ENCODE measurements at regions of chr19 and their contacts with region 1.

Region 1: GRCh38 chr19:43446746-43447489 is 18.5 kb downstream of the LYPD3 start:
- DNase-seq: peak; percentile 90
- ATAC-seq: peak; percentile 81
- H3K4me3 Mint-ChIP-seq: no peak overlapping the region
- H3K27ac Mint-ChIP-seq: no peak overlapping the region
- H3K4me1 Mint-ChIP-seq: peaks cover 27% of the 10 kb centered on the region
- H3K27me3 Mint-ChIP-seq: no peaks in the 10 kb centered on the region

Region 2: DNA sequence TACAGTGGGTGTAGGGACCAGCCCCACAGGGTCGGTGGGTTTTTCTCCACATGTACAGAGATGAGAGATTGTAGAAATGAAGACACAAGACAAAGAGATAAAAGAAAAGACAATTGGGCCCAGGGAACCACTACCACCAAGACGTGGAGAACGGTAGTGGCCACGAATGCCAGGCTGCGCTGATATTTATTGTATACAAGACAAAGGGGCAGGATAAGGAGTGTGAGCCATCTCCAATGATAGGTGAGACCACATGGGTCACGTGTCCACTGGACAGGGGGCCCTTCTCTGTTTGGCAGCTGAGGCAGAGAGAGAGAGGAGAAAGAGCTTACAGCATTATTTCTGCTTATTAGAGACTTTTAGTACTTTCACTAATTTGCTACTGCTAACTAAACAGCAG is 255.7 kb before region 1 on chr19:
- CTCF ChIA-PET with region 1: no interaction called
- POLR2A ChIA-PET with region 1: no interaction called
- intact Hi-C with region 1: no loop called
- DNase-seq: no peak
- ATAC-seq: no peak
- H3K4me3 Mint-ChIP-seq: no peak overlapping the region
- H3K27ac Mint-ChIP-seq: no peak overlapping the region
- H3K4me1 Mint-ChIP-seq: no peaks in the 10 kb centered on the region
- H3K27me3 Mint-ChIP-seq: peaks cover 37% of the 10 kb centered on the region

Region 3: GRCh38 chr19:43457809-43458208 is 10.9 kb after region 1 on chr19:
- CTCF ChIA-PET with region 1: interaction called, 44 read pairs
- POLR2A ChIA-PET with region 1: no interaction called
- intact Hi-C with region 1: no loop called
- DNase-seq: no peak
- ATAC-seq: no peak
- H3K4me3 Mint-ChIP-seq: no peak overlapping the region
- H3K27ac Mint-ChIP-seq: no peak overlapping the region
- H3K4me1 Mint-ChIP-seq: peaks cover 27% of the 10 kb centered on the region
- H3K27me3 Mint-ChIP-seq: no peaks in the 10 kb centered on the region

Region 4: GRCh38 chr19:43474986-43475705 is 28.2 kb after region 1 on chr19:
- CTCF ChIA-PET with region 1: interaction called, 3 read pairs
- POLR2A ChIA-PET with region 1: no interaction called
- intact Hi-C with region 1: loop called in 1 of 2 experiments (anchors 1 kb)
- DNase-seq: peak; percentile 98
- ATAC-seq: peak; percentile 86
- H3K4me3 Mint-ChIP-seq: peak overlapping the region; percentile 62
- H3K27ac Mint-ChIP-seq: peak overlapping the region; percentile 90
- H3K4me1 Mint-ChIP-seq: peaks cover 35% of the 10 kb centered on the region
- H3K27me3 Mint-ChIP-seq: no peaks in the 10 kb centered on the region

Region 5: DNA sequence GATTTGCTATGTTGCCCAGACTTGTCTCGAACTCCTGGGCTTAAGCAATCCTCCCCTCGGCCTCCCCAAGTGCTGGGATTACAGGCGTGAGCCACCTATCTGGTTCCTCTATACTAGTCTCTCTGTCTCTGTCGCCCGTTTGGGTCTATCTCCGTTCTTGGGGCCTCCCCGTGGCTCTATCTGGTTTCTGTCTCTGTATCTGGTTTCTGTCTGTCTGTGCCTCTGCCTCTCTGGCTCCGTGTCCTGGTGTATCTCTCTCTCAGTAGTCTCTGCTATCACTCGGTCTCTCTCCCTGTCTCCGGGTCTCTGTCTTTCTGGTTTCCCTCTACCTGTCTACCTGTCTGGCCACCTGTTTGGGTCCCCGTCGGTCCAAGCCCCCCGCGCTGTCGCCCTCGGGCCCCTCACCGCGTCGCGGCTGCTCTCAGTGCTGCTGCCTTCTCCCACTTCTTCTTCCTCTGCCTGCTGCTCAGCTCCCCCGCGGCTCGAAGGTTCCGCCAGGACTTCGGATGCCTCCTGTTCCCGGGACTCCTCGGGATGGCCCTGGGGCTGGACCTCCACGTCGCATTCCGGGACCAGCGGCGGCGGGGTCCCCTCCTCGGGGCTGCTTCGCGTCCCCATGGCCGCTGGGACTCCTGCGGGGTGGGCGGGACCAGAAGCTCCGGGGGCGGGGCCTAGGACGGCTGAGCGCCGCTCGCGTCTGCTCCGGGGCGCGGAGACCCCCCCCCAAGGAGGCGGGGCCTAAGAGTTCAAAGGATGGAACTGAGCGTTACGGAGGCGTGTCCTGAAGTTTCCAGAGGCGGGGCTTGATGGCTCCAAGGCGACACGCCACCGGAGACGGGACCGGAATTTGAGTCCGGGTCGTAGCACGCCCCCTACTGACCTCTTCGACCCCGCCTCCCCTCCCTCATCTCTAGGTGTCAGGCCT is 56.8 kb after region 1 on chr19:
- CTCF ChIA-PET with region 1: interaction called, 27 read pairs
- POLR2A ChIA-PET with region 1: interaction called, 4 read pairs
- intact Hi-C with region 1: loop called (anchors 1 to 5 kb)
- DNase-seq: peak; percentile 100
- ATAC-seq: peak; percentile 96
- H3K4me3 Mint-ChIP-seq: peak overlapping the region; percentile 96
- H3K27ac Mint-ChIP-seq: peak overlapping the region; percentile 94
- H3K4me1 Mint-ChIP-seq: peaks cover 32% of the 10 kb centered on the region
- H3K27me3 Mint-ChIP-seq: no peaks in the 10 kb centered on the region

Region 6: GRCh38 chr19:43526884-43527859 is 80.3 kb after region 1 on chr19 and contains the start of gene ETHE1:
- CTCF ChIA-PET with region 1: interaction called, 184 read pairs
- POLR2A ChIA-PET with region 1: interaction called, 3 read pairs
- intact Hi-C with region 1: no loop called
- DNase-seq: peak; percentile 87
- ATAC-seq: peak; percentile 70
- H3K4me3 Mint-ChIP-seq: peak within 1 kb of the TSS; percentile 92
- H3K27ac Mint-ChIP-seq: peak within 1 kb of the TSS; percentile 94
- H3K4me1 Mint-ChIP-seq: peaks cover 22% of the 10 kb centered on the region
- H3K27me3 Mint-ChIP-seq: no peaks in the 10 kb centered on the region
- total RNA-seq, gene ETHE1: 68.7 to 78.8 TPM

Region 7: DNA sequence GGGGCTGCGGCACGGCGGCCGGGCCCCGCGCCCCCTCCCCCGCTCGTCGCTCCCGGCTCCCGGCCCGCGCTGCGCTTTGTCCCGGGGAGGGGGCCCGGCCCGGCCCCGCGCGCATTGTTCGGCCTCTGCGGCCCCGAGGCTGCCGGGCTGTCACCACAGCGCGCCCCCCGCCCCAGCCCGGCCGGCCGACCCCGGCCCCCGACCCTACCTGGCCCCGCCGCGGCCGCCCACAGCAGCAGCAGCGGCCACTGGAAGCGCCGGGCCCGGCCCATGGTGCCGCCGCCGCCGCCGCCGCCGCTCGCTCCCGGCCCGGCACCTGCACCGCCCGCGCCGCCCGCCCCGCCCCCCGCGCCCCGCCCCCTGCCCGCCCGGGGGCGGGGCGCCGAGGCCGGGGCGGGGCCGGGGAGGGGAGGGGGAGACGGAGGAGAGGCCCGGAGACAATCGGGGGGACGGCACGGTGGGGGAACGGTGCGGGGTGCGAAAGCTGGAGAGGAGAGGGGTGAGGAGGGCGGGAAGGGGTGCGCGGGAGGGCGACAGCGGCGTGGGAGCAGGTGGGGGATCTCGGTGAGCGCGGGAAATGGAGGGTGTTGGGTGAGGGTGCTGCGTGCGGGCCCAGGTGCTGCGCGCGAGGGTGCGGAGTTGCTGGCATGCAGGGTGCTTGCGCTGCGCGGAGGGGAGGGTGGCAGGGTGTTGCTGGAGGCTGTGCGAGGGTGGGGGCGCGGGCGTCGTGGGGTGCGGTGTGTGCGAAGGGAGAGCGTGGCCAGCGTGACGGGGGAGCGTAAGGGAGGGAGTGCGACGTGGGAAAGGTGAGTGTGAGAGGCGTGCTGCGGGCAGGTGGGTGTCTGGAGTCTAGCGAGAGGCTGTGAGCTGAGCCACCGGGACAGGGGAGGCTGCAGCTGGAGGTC is 192.9 kb after region 1 on chr19 and contains the start of gene CADM4:
- CTCF ChIA-PET with region 1: no interaction called
- POLR2A ChIA-PET with region 1: no interaction called
- intact Hi-C with region 1: loop called in 1 of 2 experiments (anchors 5 kb)
- DNase-seq: peak; percentile 65
- ATAC-seq: peak; percentile 81
- H3K4me3 Mint-ChIP-seq: peak within 1 kb of the TSS; percentile 65
- H3K27ac Mint-ChIP-seq: no peak within 1 kb of the TSS
- H3K4me1 Mint-ChIP-seq: peaks cover 14% of the 10 kb centered on the region
- H3K27me3 Mint-ChIP-seq: peaks cover 26% of the 10 kb centered on the region
- total RNA-seq, gene CADM4: 0.53 to 0.61 TPM

Measured in activated CD4-positive, alpha-beta T cell treated with anti-CD3 and anti-CD28 coated beads for 36 hours (primary cell).